Activated CD8-positive, alpha-beta T cell treated with anti-CD3 and anti-CD28 coated beads for 36 hours (primary cell): ENCODE measurements at regions of chr6 and their contacts with region 1.

Region 1: DNA sequence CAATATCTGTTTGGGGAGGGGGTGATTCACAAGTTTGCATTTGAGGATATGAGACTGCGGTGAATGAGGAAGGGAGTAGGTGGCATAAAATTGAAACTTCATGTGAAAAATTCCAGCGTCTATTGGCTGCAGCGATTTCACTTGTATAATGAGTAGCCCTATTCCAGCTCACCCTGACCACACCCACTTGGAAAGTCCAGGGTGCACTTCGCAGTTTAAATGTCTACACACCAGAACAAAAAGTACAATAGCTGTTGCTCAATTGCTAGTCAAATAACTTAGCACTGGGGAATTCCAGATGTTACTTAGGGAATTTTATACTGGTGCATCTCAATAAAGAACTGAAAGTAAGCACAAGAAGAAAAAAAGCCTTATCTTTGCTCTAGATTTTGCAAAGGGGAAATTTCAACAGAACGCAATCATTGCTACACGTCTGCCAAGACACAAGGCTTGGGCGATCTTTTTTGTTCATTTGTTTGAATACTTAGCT is 6.3 kb downstream of the TNFAIP3 start:
- DNase-seq: peak; percentile 94
- ATAC-seq: peak; percentile 60
- H3K4me3 Mint-ChIP-seq: peak overlapping the region; percentile 98
- H3K27ac Mint-ChIP-seq: peak overlapping the region; percentile 95
- H3K4me1 Mint-ChIP-seq: peaks cover 54% of the 10 kb centered on the region
- H3K27me3 Mint-ChIP-seq: no peaks in the 10 kb centered on the region
- CTCF ChIP-seq: no peak

Region 2: DNA sequence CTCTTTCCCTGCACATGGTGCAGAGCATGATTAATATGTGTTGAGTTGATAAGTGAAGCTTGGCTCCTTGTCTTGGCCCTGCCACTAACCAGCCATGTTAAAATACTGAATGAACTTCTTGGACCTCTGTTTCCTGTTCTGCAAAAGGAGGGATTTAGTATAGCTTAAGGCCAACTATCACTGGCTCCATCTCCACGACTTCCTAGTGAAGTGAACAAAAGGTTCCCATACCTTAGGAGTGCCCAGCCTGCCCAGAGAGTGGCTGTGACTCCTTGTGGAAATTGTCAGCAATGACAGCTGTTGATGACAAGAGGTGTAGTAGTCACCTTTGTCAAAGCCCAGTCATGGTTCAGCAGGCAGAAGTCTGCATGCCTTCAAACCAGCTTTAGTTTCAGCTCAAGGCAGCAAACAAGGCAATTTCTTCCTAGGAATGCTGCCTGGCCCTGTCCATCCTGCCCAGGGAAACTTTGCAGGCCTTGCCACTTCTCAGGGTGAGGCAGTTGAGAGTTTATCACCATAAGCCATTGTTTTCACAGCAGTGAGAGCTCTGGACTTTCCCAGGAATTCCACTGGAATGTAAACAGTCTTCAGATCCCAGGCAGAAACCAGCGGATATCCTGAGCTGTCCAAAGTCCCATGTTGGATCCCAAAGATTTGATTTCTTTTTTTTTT is 175.9 kb before region 1 on chr6:
- CTCF ChIA-PET with region 1: interaction called, 58 read pairs
- POLR2A ChIA-PET with region 1: interaction called, 10 read pairs
- intact Hi-C with region 1: no loop called
- DNase-seq: no peak
- ATAC-seq: peak; percentile 29
- H3K4me3 Mint-ChIP-seq: no peak overlapping the region
- H3K27ac Mint-ChIP-seq: peak overlapping the region; percentile 55
- H3K4me1 Mint-ChIP-seq: peaks cover 43% of the 10 kb centered on the region
- H3K27me3 Mint-ChIP-seq: peaks cover 8% of the 10 kb centered on the region
- CTCF ChIP-seq: no peak

Region 3: GRCh38 chr6:137799950-137800568 is 73.3 kb before region 1 on chr6:
- CTCF ChIA-PET with region 1: interaction called, 221 read pairs
- POLR2A ChIA-PET with region 1: interaction called, 10 read pairs
- intact Hi-C with region 1: loop called (anchors 1 kb)
- DNase-seq: peak; percentile 85
- ATAC-seq: peak; percentile 77
- H3K4me3 Mint-ChIP-seq: no peak overlapping the region
- H3K27ac Mint-ChIP-seq: peak overlapping the region; percentile 88
- H3K4me1 Mint-ChIP-seq: peaks cover 72% of the 10 kb centered on the region
- H3K27me3 Mint-ChIP-seq: no peaks in the 10 kb centered on the region
- CTCF ChIP-seq: peak; percentile 74

Region 4: GRCh38 chr6:137892271-137892708 is 19.0 kb after region 1 on chr6:
- CTCF ChIA-PET with region 1: interaction called, 14 read pairs
- POLR2A ChIA-PET with region 1: interaction called, 3 read pairs
- intact Hi-C with region 1: no loop called
- DNase-seq: no peak
- ATAC-seq: no peak
- H3K4me3 Mint-ChIP-seq: no peak overlapping the region
- H3K27ac Mint-ChIP-seq: no peak overlapping the region
- H3K4me1 Mint-ChIP-seq: peaks cover 22% of the 10 kb centered on the region
- H3K27me3 Mint-ChIP-seq: no peaks in the 10 kb centered on the region
- CTCF ChIP-seq: no peak

Region 5: GRCh38 chr6:137927777-137928218 is 54.5 kb after region 1 on chr6:
- CTCF ChIA-PET with region 1: interaction called, 30 read pairs
- POLR2A ChIA-PET with region 1: interaction called, 11 read pairs
- intact Hi-C with region 1: no loop called
- DNase-seq: peak; percentile 93
- ATAC-seq: peak; percentile 94
- H3K4me3 Mint-ChIP-seq: peak overlapping the region; percentile 65
- H3K27ac Mint-ChIP-seq: peak overlapping the region; percentile 97
- H3K4me1 Mint-ChIP-seq: peaks cover 78% of the 10 kb centered on the region
- H3K27me3 Mint-ChIP-seq: no peaks in the 10 kb centered on the region
- CTCF ChIP-seq: no peak

Region 6: GRCh38 chr6:137944793-137945498 is 71.6 kb after region 1 on chr6:
- CTCF ChIA-PET with region 1: interaction called, 360 read pairs
- POLR2A ChIA-PET with region 1: interaction called, 17 read pairs
- intact Hi-C with region 1: loop called (anchors 2 kb)
- DNase-seq: no peak
- ATAC-seq: peak; percentile 31
- H3K4me3 Mint-ChIP-seq: no peak overlapping the region
- H3K27ac Mint-ChIP-seq: peak overlapping the region; percentile 4
- H3K4me1 Mint-ChIP-seq: peaks cover 53% of the 10 kb centered on the region
- H3K27me3 Mint-ChIP-seq: no peaks in the 10 kb centered on the region
- CTCF ChIP-seq: peak; percentile 79

Region 7: GRCh38 chr6:138001750-138002349 is 128.5 kb after region 1 on chr6:
- CTCF ChIA-PET with region 1: interaction called, 59 read pairs
- POLR2A ChIA-PET with region 1: interaction called, 3 read pairs
- intact Hi-C with region 1: no loop called
- DNase-seq: peak; percentile 85
- ATAC-seq: peak; percentile 56
- H3K4me3 Mint-ChIP-seq: no peak overlapping the region
- H3K27ac Mint-ChIP-seq: no peak overlapping the region
- H3K4me1 Mint-ChIP-seq: peaks cover 17% of the 10 kb centered on the region
- H3K27me3 Mint-ChIP-seq: no peaks in the 10 kb centered on the region
- CTCF ChIP-seq: peak; percentile 92

Region 8: DNA sequence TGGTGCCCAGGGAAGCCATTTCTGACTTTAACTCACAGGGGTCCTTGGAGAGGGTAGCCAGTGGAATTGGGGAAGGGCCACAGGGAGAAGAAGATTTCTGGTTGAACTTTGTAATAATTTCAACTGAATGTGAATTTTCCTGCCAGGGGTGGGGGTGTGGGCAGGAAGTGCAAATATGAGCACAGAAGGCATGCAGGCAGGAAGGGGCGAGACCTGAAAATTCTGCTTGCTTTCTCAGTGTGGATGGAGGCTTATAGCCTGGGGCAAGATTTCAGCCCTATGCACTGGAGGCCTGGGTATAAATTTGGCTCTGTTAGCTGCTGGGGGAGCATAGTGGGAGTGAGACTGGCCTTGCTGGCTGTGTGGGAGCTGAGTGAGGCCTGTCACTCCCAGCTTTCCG is 179.4 kb after region 1 on chr6:
- CTCF ChIA-PET with region 1: no interaction called
- POLR2A ChIA-PET with region 1: no interaction called
- intact Hi-C with region 1: no loop called
- DNase-seq: no peak
- ATAC-seq: no peak
- H3K4me3 Mint-ChIP-seq: no peak overlapping the region
- H3K27ac Mint-ChIP-seq: no peak overlapping the region
- H3K4me1 Mint-ChIP-seq: no peaks in the 10 kb centered on the region
- H3K27me3 Mint-ChIP-seq: peaks cover 43% of the 10 kb centered on the region
- CTCF ChIP-seq: no peak